ENCODE measurements at regions of chr16 and their contacts with region 1.

Region 1: DNA sequence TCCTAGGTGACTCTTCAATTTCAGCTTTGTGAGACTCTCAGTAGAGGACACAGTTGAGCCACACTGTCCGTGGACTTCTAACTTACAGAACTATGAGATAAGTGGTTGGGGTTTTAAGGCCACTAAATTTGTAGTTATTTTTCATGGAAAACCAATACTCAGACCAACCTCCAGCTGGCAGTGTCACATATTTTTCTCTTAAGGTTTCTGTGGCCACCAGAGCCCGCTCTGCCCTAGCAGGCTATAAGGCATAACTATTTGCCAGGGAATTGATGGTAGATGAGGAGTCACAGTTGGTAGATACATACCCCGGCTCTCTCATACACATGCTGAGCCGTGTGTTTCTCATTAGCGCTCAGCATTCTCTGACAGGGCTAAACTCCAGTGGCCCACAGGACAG is 336.8 kb upstream of the MON1B start:
- DNase-seq: no peak
- ATAC-seq: no peak

Region 2: DNA sequence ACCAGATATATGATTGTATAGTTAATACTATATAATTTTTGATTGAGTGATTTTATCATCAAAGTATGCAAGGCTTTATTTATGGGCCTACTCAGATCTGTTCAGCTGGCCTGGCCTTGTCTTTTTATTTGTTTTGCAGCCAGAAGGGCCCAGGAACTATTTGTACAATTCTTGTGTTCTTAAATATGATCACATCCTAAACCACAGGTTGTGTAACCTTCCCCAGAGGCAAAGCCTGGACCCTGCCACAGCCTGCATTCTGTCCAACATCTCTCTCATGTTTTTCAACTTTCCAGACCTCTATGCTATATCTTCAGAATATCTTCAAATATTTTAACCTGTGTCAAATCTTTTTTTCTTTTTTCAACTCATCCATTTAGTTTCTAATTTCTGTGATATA is 73.7 kb before region 1 on chr16:
- intact Hi-C with region 1: loop called (anchors 10 kb)
- DNase-seq: no peak
- ATAC-seq: no peak

Region 3: GRCh38 chr16:76835339-76835738 is 18.9 kb before region 1 on chr16:
- intact Hi-C with region 1: no loop called
- DNase-seq: no peak
- ATAC-seq: no peak